ENCODE measurements at regions of chr11 and their contacts with region 1.

Region 1: DNA sequence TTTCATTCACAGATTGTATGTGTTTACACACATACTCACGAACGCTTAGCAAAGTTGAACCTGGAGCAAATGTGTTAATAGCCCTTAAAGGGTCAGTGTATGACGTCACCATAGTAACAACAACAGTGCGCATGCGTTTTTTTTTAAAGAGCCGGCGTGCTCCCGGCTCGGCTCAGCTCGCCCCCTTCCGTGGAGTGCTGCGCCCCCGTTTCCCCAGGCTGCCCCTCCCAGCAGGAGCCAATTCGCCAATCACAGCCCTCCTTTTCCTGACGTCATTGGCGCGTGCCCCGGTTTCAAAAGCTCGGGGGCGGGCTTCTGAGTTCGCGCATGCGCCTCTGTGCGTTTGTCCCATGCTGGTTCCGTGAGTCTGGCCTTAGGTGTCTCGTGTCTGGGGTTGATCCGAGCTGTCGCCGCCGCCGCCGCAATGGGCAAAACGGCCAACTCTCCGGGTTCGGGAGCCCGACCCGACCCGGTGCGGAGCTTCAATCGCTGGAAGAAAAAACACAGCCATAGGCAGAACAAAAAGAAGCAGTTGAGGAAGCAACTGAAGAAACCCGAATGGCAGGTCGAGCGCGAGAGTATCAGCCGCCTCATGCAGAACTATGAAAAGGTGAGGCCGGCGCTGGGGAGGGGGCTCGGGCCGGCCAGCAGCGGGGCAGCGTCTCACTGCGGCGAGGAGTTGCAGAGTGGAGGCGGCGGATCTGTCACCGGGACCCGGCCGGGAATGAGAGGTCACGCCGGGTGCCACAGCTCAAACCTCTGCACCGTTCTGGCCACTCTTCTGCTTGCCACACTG is at the start of gene DDX10:
- DNase-seq: peak; percentile 99
- H3K4me3 ChIP-seq: peak within 1 kb of the TSS; percentile 87 to 96 (median 90)
- H3K27ac ChIP-seq: peak within 1 kb of the TSS; percentile 58 to 84 (median 76)
- H3K4me1 ChIP-seq: peaks cover 16 to 46% (median 33%) of the 10 kb centered on the region in 4 donors
- H3K27me3 ChIP-seq: no peaks in the 10 kb centered on the region
- CTCF ChIP-seq: peak in 1 of 7 experiments; percentile 24
- EP300 ChIP-seq: no peak
- POLR2A ChIP-seq: peak in 1 of 4 donors; percentile 12
- total RNA-seq, gene DDX10: 11.6 to 22.6 (median 16.5) TPM

Region 2: GRCh38 chr11:108008656-108009496 is 656.1 kb before region 1 on chr11 and contains the start of gene CUL5:
- intact Hi-C with region 1: loop called (anchors 10 kb)
- DNase-seq: peak; percentile 92 to 97
- H3K4me3 ChIP-seq: peak within 1 kb of the TSS; percentile 75 to 98 (median 90)
- H3K27ac ChIP-seq: peak within 1 kb of the TSS; percentile 90 to 98 (median 97)
- H3K4me1 ChIP-seq: peaks cover 13 to 51% (median 44%) of the 10 kb centered on the region in 4 donors
- H3K27me3 ChIP-seq: no peaks in the 10 kb centered on the region
- CTCF ChIP-seq: peak in 5 of 7 experiments; percentile 78 to 95 (median 87)
- EP300 ChIP-seq: no peak
- POLR2A ChIP-seq: no peak
- total RNA-seq, gene CUL5: 24.0 to 98.0 (median 49.1) TPM

Measured in stomach (tissue), 19 donors.